ENCODE measurements at regions of chr20 and their contacts with region 1.

Region 1: DNA sequence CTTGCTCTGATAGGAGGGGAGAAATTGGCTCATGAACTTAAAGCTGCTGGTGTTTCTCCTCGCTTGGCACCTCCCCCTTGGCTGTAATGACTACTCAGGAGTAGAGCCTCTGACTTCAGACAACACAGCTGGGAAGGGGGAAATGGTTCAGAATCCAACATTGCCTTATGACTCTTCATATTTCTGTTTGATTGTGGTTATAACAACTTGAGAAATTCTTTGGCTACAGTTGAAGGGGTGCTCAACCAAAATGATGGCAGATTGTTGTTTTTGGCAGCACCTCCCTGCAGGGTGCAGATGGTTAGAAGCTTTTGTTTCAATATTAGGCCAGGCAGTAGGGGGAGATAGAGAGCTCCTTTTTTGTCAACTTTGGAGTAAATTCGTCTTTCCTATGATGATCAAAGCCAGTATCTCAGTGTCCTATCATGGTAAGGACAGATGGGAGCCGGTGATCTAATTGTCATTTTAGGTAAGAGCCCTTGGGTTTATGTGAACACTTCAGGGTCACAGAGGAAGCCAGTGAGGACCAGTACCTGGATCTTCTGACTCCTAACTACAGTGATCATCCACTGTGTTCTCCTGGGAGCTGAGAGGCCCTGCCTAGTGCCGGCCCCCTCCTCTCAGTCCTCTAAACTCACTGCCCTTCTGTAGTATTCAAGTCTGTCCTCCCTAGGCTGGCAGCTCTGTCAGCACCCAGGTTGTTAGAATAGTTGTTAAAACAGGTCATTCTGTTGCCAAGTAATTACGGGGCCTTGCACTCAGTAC is 39.9 kb downstream of the RPRD1B start:
- DNase-seq: peak in 1 of 2 experiments; percentile 66
- H3K4me3 ChIP-seq: no peak overlapping the region
- H3K27ac ChIP-seq: no peak overlapping the region
- H3K4me1 ChIP-seq: 0 out of 7 replicates have a peak, but pooled peaks cover 0 to 2% (median 0%) of the 10 kb centered on the region in 4 experiments
- H3K27me3 ChIP-seq: no peaks in the 10 kb centered on the region
- CTCF ChIP-seq: peak in 2 of 3 experiments; percentile 69 to 78; a peak in 3 of 4 replicates
- EP300 ChIP-seq: no peak
- POLR2A ChIP-seq: no peak
- RAD21 ChIP-seq: peak; percentile 49 to 62

Region 2: GRCh38 chr20:38057351-38057972 is 16.0 kb before region 1 on chr20:
- CTCF ChIA-PET with region 1: interaction called, 21 read pairs
- POLR2A ChIA-PET with region 1: no interaction called
- DNase-seq: peak in 1 of 2 experiments; percentile 92
- H3K4me3 ChIP-seq: no peak overlapping the region
- H3K27ac ChIP-seq: no peak overlapping the region
- H3K4me1 ChIP-seq: no peaks in the 10 kb centered on the region
- H3K27me3 ChIP-seq: no peaks in the 10 kb centered on the region
- CTCF ChIP-seq: peak; percentile 72 to 94 (median 90)
- EP300 ChIP-seq: no peak
- POLR2A ChIP-seq: no peak
- RAD21 ChIP-seq: peak; percentile 85 to 90

Region 3: DNA sequence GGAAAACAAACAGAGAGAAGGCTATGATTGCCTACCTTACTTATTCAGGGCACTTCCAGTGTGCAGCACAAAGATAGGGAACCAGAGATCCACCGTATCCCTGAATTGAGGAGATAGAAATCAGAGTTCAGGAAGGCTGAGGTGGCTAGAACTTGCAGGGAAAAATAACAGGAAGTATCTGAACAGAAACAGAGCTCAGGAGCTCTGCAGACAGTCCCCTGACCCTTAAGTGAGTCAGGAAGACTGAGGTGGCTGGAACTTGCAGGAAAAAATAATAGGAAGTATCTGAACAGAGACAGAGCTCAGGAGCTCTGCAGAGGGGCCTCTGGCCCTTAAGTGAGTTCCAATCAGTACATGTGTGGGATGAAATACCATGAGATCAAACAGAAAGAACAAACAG is 25.5 kb after region 1 on chr20:
- CTCF ChIA-PET with region 1: interaction called, 16 read pairs
- POLR2A ChIA-PET with region 1: no interaction called
- DNase-seq: no peak
- H3K4me3 ChIP-seq: no peak overlapping the region
- H3K27ac ChIP-seq: no peak overlapping the region
- H3K4me1 ChIP-seq: no peaks in the 10 kb centered on the region
- H3K27me3 ChIP-seq: no peaks in the 10 kb centered on the region
- CTCF ChIP-seq: no peak
- EP300 ChIP-seq: no peak
- POLR2A ChIP-seq: no peak
- RAD21 ChIP-seq: no peak

Region 4: DNA sequence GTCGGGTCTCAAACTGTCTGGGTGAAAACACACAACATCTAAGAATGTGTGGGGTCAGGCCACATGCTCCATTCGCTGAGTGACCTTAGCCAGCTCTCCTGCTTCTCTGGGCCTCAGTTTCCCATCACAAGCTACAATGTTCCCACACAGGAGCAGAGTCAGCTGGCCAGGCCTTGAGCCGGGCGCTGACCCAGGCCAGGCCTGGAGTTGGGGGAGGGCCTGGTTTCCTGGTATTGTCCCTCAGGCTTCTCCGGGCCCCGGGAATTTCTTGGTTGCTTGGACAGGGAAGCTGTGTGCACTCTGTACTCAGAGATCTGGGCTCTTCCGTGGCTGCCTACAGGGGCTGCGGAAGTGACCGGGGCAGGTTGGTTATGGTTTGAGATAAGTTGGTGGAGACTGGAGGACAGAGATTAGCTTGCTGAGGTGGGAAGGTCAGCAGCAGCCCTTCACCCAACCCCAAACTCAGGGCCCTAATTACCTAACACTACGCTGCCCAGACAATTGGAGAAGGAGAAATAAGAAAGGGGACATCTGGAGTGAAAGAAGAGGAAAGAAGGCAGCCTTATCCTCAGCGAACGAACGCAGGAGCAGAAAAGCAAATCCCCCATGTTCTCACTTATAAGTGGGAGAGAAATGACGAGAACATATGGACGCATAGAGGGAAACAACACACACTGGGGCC is 85.3 kb after region 1 on chr20:
- CTCF ChIA-PET with region 1: interaction called, 10 read pairs
- POLR2A ChIA-PET with region 1: no interaction called
- DNase-seq: no peak
- H3K4me3 ChIP-seq: no peak overlapping the region
- H3K27ac ChIP-seq: no peak overlapping the region
- H3K4me1 ChIP-seq: no peaks in the 10 kb centered on the region
- H3K27me3 ChIP-seq: no peaks in the 10 kb centered on the region
- CTCF ChIP-seq: no peak
- EP300 ChIP-seq: no peak
- POLR2A ChIP-seq: no peak
- RAD21 ChIP-seq: no peak

Region 5: GRCh38 chr20:38173237-38174156 is 100.0 kb after region 1 on chr20:
- CTCF ChIA-PET with region 1: interaction called, 11 read pairs
- POLR2A ChIA-PET with region 1: no interaction called
- DNase-seq: no peak
- H3K4me3 ChIP-seq: no peak overlapping the region
- H3K27ac ChIP-seq: no peak overlapping the region
- H3K4me1 ChIP-seq: no peaks in the 10 kb centered on the region
- H3K27me3 ChIP-seq: no peaks in the 10 kb centered on the region
- CTCF ChIP-seq: no peak
- EP300 ChIP-seq: no peak
- POLR2A ChIP-seq: no peak
- RAD21 ChIP-seq: no peak

Measured in H1 (cell line).